ENCODE measurements at regions of chr18 and their contacts with region 1.

Region 1: GRCh38 chr18:79644006-79644665 is 35.5 kb upstream of the CTDP1 start:
- DNase-seq: peak; percentile 15
- ATAC-seq: peak; percentile 99
- H3K4me3 ChIP-seq: no peak overlapping the region
- H3K27ac ChIP-seq: no peak overlapping the region
- H3K4me1 ChIP-seq: peaks cover 3% of the 10 kb centered on the region
- H3K27me3 ChIP-seq: no peaks in the 10 kb centered on the region
- CTCF ChIP-seq: peak; percentile 92 to 98 (median 93)
- EP300 ChIP-seq: no peak
- POLR2A ChIP-seq: no peak
- RAD21 ChIP-seq: peak; percentile 97

Region 2: GRCh38 chr18:79528846-79529245 is 115.3 kb before region 1 on chr18:
- CTCF ChIA-PET with region 1: interaction called, 7 read pairs
- POLR2A ChIA-PET with region 1: no interaction called
- RAD21 ChIA-PET with region 1: interaction called, 5 read pairs
- SMC1A ChIA-PET with region 1: interaction called, 3 read pairs
- in situ Hi-C with region 1: no loop called
- intact Hi-C with region 1: loop called (anchors 1 kb)
- DNase-seq: no peak
- ATAC-seq: peak; percentile 59
- H3K4me3 ChIP-seq: no peak overlapping the region
- H3K27ac ChIP-seq: no peak overlapping the region
- H3K4me1 ChIP-seq: peaks cover 9% of the 10 kb centered on the region
- H3K27me3 ChIP-seq: no peaks in the 10 kb centered on the region
- CTCF ChIP-seq: peak; percentile 83 to 93 (median 84)
- EP300 ChIP-seq: no peak
- POLR2A ChIP-seq: no peak
- RAD21 ChIP-seq: peak; percentile 99

Region 3: DNA sequence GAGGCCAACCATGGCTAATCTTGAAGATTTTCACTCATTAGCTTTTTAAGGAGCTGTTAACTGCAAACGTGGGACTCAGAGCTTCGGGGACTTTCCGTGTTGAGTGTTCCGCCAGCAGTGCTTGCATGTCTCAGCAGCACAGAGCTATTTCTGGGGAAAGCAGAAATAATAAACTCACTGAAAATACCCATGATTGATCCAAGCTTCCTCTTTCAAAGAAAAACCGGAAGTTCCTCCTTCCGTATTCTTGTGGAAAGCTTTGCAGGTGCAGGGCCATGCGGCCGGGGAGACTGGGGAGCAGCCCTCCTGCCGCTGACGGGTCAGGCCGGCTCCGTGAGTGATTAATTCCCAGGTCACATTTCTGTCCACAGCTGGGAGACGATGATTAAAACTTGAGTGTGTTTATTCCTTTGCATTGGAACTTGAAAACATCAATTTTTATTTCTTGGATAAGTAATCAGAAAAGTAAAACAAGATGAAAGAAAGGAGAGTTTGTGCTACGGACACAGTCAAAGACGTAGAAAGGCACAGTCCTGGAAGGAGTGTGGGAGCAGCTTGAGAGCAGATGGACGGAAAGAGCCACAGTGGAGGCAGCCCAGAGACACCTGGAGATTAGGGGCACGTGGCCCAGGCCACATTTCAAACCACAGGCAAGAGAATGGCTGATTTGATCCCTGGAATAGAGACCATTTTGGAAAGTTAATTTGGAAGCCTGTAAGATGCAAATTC is 18.8 kb before region 1 on chr18:
- CTCF ChIA-PET with region 1: interaction called, 9 read pairs
- POLR2A ChIA-PET with region 1: no interaction called
- RAD21 ChIA-PET with region 1: interaction called, 12 read pairs
- SMC1A ChIA-PET with region 1: interaction called, 18 read pairs
- in situ Hi-C with region 1: no loop called
- intact Hi-C with region 1: no loop called
- DNase-seq: peak; percentile 79
- ATAC-seq: peak; percentile 89
- H3K4me3 ChIP-seq: peak overlapping the region; percentile 23; the same call in 1 of the 2 replicates
- H3K27ac ChIP-seq: peak overlapping the region; percentile 89
- H3K4me1 ChIP-seq: peaks cover 32% of the 10 kb centered on the region
- H3K27me3 ChIP-seq: no peaks in the 10 kb centered on the region
- CTCF ChIP-seq: no peak
- EP300 ChIP-seq: peak in 1 of 2 experiments; percentile 39; a peak in 1 of 4 replicates
- POLR2A ChIP-seq: 0 out of 2 replicates have a peak, but pooled peaks have one; percentile 33
- RAD21 ChIP-seq: no peak

Region 4: DNA sequence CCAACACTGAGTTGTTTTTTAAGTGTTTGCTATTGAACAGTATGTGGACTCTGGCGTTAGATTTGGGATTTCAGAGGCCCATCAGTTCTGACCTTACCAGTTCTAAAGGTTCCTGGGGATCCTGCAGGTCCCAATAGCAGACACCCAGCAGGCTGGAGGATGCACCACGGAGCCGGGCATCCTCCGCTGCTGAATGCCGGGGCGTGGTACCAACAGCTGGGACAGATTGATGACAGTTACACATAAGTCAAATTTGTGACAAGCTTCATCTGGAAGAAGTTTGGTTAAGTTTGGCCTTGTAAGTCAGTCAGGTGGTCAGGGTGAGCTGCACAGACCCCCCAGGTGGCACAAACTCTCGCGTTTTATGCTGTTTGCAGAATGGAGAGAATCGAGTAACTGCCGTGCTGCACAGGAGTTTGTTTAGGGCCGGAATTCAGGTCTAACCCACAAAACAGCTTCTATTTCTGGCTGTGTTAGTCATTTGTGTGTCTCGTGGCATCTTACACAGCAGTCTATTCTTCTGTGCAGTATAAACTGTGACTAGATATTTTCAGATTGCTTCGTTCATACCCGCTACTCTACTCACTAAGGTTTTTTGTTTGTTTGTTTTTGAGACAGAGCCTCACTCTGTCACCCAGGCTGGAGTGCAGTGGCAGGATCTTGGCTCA is 54.7 kb after region 1 on chr18:
- CTCF ChIA-PET with region 1: no interaction called
- POLR2A ChIA-PET with region 1: no interaction called
- RAD21 ChIA-PET with region 1: no interaction called
- SMC1A ChIA-PET with region 1: no interaction called
- in situ Hi-C with region 1: no loop called
- intact Hi-C with region 1: no loop called
- DNase-seq: no peak
- ATAC-seq: no peak
- H3K4me3 ChIP-seq: no peak overlapping the region
- H3K27ac ChIP-seq: no peak overlapping the region
- H3K4me1 ChIP-seq: no peaks in the 10 kb centered on the region
- H3K27me3 ChIP-seq: no peaks in the 10 kb centered on the region
- CTCF ChIP-seq: no peak
- EP300 ChIP-seq: no peak
- POLR2A ChIP-seq: no peak
- RAD21 ChIP-seq: no peak